Natural killer cell (primary cell): ENCODE measurements at regions of chr9 and their contacts with region 1.

Region 1: GRCh38 chr9:75088260-75088905 is at the start of gene OSTF1:
- DNase-seq: peak; percentile 95 to 97
- ATAC-seq: peak; percentile 75 to 95 (median 87)
- H3K4me3 ChIP-seq: peak within 1 kb of the TSS; percentile 98
- H3K4me3 Mint-ChIP-seq: peak within 1 kb of the TSS; percentile 100
- H3K27ac ChIP-seq: peak within 1 kb of the TSS; percentile 92
- H3K27ac Mint-ChIP-seq: peak within 1 kb of the TSS; percentile 92 to 100
- H3K4me1 ChIP-seq: peaks cover 39% of the 10 kb centered on the region
- H3K4me1 Mint-ChIP-seq: peaks cover 71 to 83% of the 10 kb centered on the region in 2 donors
- H3K27me3 ChIP-seq: no peaks in the 10 kb centered on the region
- H3K27me3 Mint-ChIP-seq: no peaks in the 10 kb centered on the region
- CTCF ChIP-seq: no peak
- total RNA-seq, gene OSTF1: 140 to 187 (median 177) TPM

Region 2: GRCh38 chr9:74598874-74599273 is 489.5 kb before region 1 on chr9:
- intact Hi-C with region 1: no loop called
- DNase-seq: no peak
- ATAC-seq: no peak
- H3K4me3 ChIP-seq: no peak overlapping the region
- H3K4me3 Mint-ChIP-seq: no peak overlapping the region
- H3K27ac ChIP-seq: no peak overlapping the region
- H3K27ac Mint-ChIP-seq: no peak overlapping the region
- H3K4me1 ChIP-seq: no peaks in the 10 kb centered on the region
- H3K4me1 Mint-ChIP-seq: no peaks in the 10 kb centered on the region
- H3K27me3 ChIP-seq: no peaks in the 10 kb centered on the region
- H3K27me3 Mint-ChIP-seq: no peaks in the 10 kb centered on the region
- CTCF ChIP-seq: no peak

Region 3: DNA sequence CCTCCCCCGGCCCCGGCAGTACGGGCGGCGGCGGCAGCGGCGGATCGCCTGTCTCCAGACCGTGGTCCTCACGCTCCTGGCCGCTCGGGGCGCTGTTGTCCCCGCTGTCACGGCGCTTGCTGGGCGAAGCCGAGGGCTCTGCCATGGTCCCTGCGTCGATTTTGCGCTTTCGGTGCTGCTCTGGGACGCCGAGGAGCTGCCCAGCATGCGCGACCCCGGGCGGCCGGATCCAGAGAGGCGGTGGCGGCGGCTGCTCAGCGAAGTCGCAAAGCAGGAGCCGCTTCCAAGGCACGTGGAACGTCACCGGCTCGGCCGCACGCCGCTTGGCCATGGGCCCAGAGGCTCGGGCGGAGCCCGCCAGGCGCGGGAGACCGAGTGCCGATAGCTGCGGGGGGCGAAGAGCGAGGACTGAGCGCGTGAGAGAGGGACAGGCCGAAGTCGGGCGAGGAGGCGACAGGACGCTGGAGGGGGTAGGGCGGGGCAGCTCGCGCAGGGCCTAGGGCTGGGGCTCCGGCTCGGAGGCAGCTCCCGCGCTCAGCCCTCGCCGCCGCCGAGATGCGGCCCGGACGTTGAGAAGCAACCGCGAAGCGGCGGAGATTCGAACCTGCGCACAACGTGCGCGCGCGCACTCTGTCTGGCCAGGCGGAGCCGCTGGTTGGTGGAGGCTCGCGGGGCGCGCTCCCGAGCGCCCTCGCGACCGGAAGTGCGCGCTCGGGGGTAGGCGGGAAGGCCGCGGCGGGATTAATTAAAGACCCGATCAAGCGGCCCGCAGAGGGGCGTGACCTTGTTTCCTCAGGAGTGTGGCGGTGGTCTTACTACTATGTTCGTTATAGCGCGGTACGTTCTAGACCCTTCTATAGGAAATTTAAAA is 135.9 kb before region 1 on chr9 and contains the start of gene C9orf40:
- intact Hi-C with region 1: loop called (anchors 2 kb)
- DNase-seq: peak; percentile 89 to 94
- ATAC-seq: peak; percentile 90 to 97 (median 90)
- H3K4me3 ChIP-seq: peak within 1 kb of the TSS; percentile 81
- H3K4me3 Mint-ChIP-seq: peak within 1 kb of the TSS; percentile 98
- H3K27ac ChIP-seq: peak within 1 kb of the TSS; percentile 85
- H3K27ac Mint-ChIP-seq: peak within 1 kb of the TSS; percentile 92 to 97
- H3K4me1 ChIP-seq: peaks cover 13% of the 10 kb centered on the region
- H3K4me1 Mint-ChIP-seq: peaks cover 18 to 26% of the 10 kb centered on the region in 2 donors
- H3K27me3 ChIP-seq: no peaks in the 10 kb centered on the region
- H3K27me3 Mint-ChIP-seq: no peaks in the 10 kb centered on the region
- CTCF ChIP-seq: peak; percentile 76
- total RNA-seq, gene C9orf40: 1.8 to 3.9 (median 3.6) TPM

Region 4: GRCh38 chr9:75027187-75028107 is 60.9 kb before region 1 on chr9:
- intact Hi-C with region 1: loop called (anchors 1 kb)
- DNase-seq: peak in 1 of 2 donors; percentile 66
- ATAC-seq: peak; percentile 26 to 43 (median 31)
- H3K4me3 ChIP-seq: peak overlapping the region; percentile 74
- H3K4me3 Mint-ChIP-seq: peak overlapping the region; percentile 92
- H3K27ac ChIP-seq: peak overlapping the region; percentile 85
- H3K27ac Mint-ChIP-seq: peak overlapping the region; percentile 87 to 97
- H3K4me1 ChIP-seq: peaks cover 19% of the 10 kb centered on the region
- H3K4me1 Mint-ChIP-seq: peaks cover 25 to 32% of the 10 kb centered on the region in 2 donors
- H3K27me3 ChIP-seq: no peaks in the 10 kb centered on the region
- H3K27me3 Mint-ChIP-seq: peaks cover 0 to 3% of the 10 kb centered on the region in 2 donors
- CTCF ChIP-seq: peak; percentile 50

Region 5: DNA sequence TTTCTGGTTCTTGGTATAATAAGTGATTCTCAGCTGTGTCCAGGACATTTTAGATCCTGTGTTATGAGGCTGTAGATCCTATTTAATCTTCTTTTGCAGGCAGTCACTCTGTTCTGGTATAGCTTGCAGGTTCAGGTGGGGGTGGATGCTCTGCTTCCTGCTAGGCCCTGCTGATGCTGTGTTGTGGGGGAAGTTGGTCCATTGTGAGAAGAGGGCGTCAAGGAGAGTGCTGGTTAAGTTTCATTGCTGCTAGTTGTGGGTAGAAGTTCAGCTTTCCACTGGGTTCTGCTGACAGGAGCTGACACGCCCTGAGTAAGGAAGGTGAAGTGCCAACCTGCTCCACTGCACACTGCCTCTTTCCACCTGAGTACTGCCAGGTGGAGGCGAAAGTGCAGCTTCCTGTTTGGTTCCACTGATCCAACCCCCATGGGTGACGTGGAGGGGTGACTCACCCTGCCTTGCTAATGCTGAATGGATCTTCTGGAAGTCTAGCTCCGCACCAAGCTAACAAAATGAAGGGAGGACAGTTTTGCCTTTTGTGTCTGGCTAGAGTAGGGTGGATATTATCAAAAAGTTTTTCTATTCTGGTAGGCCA is 16.8 kb before region 1 on chr9:
- intact Hi-C with region 1: no loop called
- DNase-seq: peak in 1 of 2 donors; percentile 68
- ATAC-seq: no peak
- H3K4me3 ChIP-seq: no peak overlapping the region
- H3K4me3 Mint-ChIP-seq: no peak overlapping the region
- H3K27ac ChIP-seq: no peak overlapping the region
- H3K27ac Mint-ChIP-seq: peak overlapping the region; percentile 3 to 71
- H3K4me1 ChIP-seq: peaks cover 5% of the 10 kb centered on the region
- H3K4me1 Mint-ChIP-seq: peaks cover 7 to 16% of the 10 kb centered on the region in 2 donors
- H3K27me3 ChIP-seq: no peaks in the 10 kb centered on the region
- H3K27me3 Mint-ChIP-seq: no peaks in the 10 kb centered on the region
- CTCF ChIP-seq: no peak

Region 6: DNA sequence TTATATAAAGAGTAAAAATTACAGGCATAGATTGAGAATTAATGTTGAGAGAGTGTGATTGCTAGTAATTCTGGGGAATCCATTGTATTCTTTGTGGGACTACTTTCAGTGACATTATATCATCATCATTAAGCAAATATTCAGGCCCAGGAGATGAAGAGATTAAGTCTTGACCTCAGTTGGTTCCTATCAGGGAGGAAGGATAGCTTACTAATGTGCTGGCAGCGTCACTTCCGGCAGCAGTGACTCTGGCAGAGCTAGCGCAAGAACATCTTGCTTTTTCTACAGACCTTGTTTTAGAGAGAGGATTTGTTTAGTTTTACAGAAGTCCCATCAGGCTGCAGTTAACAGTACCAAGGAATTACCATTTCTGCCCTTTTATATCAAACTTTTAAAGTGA is 20.2 kb after region 1 on chr9:
- intact Hi-C with region 1: loop called (anchors 1 kb)
- DNase-seq: peak in 1 of 2 donors; percentile 46
- ATAC-seq: peak; percentile 71 to 84 (median 77)
- H3K4me3 ChIP-seq: no peak overlapping the region
- H3K4me3 Mint-ChIP-seq: peak overlapping the region; percentile 69
- H3K27ac ChIP-seq: peak overlapping the region; percentile 50
- H3K27ac Mint-ChIP-seq: peak overlapping the region; percentile 69 to 88
- H3K4me1 ChIP-seq: peaks cover 50% of the 10 kb centered on the region
- H3K4me1 Mint-ChIP-seq: peaks cover 70 to 78% of the 10 kb centered on the region in 2 donors
- H3K27me3 ChIP-seq: no peaks in the 10 kb centered on the region
- H3K27me3 Mint-ChIP-seq: no peaks in the 10 kb centered on the region
- CTCF ChIP-seq: no peak

Region 7: GRCh38 chr9:75121914-75122558 is 33.7 kb after region 1 on chr9:
- intact Hi-C with region 1: loop called (anchors 2 kb)
- DNase-seq: peak in 1 of 2 donors; percentile 18
- ATAC-seq: peak; percentile 77 to 78 (median 78)
- H3K4me3 ChIP-seq: no peak overlapping the region
- H3K4me3 Mint-ChIP-seq: peak overlapping the region; percentile 77
- H3K27ac ChIP-seq: peak overlapping the region; percentile 32
- H3K27ac Mint-ChIP-seq: peak overlapping the region; percentile 76 to 83
- H3K4me1 ChIP-seq: peaks cover 21% of the 10 kb centered on the region
- H3K4me1 Mint-ChIP-seq: peaks cover 65 to 70% of the 10 kb centered on the region in 2 donors
- H3K27me3 ChIP-seq: no peaks in the 10 kb centered on the region
- H3K27me3 Mint-ChIP-seq: no peaks in the 10 kb centered on the region
- CTCF ChIP-seq: no peak

Region 8: DNA sequence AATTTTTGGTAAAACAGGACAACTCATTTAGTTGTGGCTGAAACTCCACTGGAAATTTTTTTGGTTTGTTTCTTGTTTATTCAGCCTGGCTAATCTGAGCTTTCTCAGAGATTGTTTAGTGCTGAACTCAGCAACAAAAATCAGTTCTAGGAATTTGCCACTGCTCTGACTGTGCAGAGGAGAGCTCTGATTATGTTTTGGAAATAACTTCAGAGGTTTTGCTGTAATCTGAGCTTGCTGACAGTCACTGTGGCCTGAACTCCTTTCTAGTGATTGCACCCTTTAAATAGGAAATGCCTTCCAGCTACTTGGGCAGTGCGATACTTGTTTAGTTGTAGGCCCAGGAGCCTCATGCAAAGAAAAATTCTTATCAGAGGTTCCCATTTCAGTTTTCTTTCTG is 60.2 kb after region 1 on chr9:
- intact Hi-C with region 1: loop called (anchors 2 kb)
- DNase-seq: peak in 1 of 2 donors; percentile 34
- ATAC-seq: no peak
- H3K4me3 ChIP-seq: no peak overlapping the region
- H3K4me3 Mint-ChIP-seq: peak overlapping the region; percentile 70
- H3K27ac ChIP-seq: peak overlapping the region; percentile 57
- H3K27ac Mint-ChIP-seq: peak overlapping the region; percentile 86 to 97
- H3K4me1 ChIP-seq: peaks cover 51% of the 10 kb centered on the region
- H3K4me1 Mint-ChIP-seq: peaks cover 85 to 87% of the 10 kb centered on the region in 2 donors
- H3K27me3 ChIP-seq: no peaks in the 10 kb centered on the region
- H3K27me3 Mint-ChIP-seq: no peaks in the 10 kb centered on the region
- CTCF ChIP-seq: no peak

Region 9: GRCh38 chr9:76393963-76394679 is 1305.7 kb after region 1 on chr9 and contains the start of gene RFK:
- intact Hi-C with region 1: loop called (anchors 10 kb)
- DNase-seq: peak; percentile 94 to 95
- ATAC-seq: peak; percentile 88 to 98 (median 91)
- H3K4me3 ChIP-seq: peak within 1 kb of the TSS; percentile 99
- H3K4me3 Mint-ChIP-seq: peak within 1 kb of the TSS; percentile 100
- H3K27ac ChIP-seq: peak within 1 kb of the TSS; percentile 90
- H3K27ac Mint-ChIP-seq: peak within 1 kb of the TSS; percentile 98 to 99
- H3K4me1 ChIP-seq: peaks cover 15% of the 10 kb centered on the region
- H3K4me1 Mint-ChIP-seq: peaks cover 12% of the 10 kb centered on the region in 2 donors
- H3K27me3 ChIP-seq: no peaks in the 10 kb centered on the region
- H3K27me3 Mint-ChIP-seq: no peaks in the 10 kb centered on the region
- CTCF ChIP-seq: peak; percentile 41
- total RNA-seq, gene RFK: 8.7 to 11.5 (median 9.2) TPM